Esophagus muscularis mucosa (tissue), 4 donors: ENCODE measurements at regions of chr14 and their contacts with region 1.

Region 1: DNA sequence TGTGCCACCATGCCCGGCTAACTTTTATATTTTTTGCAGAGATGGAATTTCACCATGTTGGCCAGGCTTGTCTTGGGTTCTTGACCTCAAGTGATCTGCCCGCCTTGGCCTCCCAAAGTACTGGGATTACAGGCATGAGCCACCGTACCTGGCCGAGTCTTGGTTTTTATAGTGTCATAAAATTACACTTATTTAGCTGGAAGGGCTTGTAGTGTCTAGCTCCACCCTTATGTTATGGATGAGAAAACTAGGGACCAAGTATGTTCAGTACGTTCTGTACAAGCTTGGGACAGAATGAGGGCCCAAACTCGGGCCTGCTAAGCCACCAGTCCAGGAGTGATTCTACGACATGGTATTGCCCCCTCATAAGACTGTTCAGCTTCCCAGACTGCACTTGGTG is 35.1 kb downstream of the SYNE2 start:
- DNase-seq: no peak
- H3K4me3 ChIP-seq: no peak overlapping the region
- H3K27ac ChIP-seq: no peak overlapping the region
- H3K4me1 ChIP-seq: peaks cover 28 to 30% (median 29%) of the 10 kb centered on the region in 4 donors
- H3K27me3 ChIP-seq: no peaks in the 10 kb centered on the region
- CTCF ChIP-seq: no peak
- EP300 ChIP-seq: no peak
- POLR2A ChIP-seq: no peak

Region 2: DNA sequence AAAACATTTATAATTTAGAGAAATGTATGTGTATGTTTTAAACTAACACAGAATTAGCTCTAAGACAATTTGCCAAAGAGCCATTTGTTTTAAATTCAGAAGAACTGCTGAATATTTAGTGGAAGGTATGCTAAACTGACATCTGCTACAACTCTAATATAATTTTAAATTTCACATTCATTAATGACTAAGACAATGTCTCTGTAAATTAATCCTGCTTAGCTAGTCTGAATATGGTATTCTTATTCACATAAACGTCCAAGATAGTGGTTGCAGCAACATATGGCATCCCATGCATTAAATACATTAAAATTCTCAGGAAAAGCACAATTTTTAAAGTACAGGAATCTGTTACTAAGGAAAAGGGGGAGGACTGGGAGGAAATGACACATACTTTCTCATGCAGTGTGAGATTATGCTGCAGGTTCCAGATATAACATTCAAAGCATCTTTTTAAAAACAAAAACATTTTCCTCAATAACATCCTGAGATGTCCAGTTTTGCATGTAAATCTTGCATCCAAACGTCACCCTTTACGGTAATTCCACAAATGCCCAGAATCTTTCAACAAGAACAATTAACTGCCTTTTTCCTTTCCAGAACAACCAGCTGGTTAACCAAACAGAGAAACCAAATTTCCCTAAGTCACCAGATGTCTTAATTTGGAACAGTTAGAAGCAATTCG is 273.1 kb before region 1 on chr14:
- intact Hi-C with region 1: no loop called
- DNase-seq: no peak
- H3K4me3 ChIP-seq: no peak overlapping the region
- H3K27ac ChIP-seq: no peak overlapping the region
- H3K4me1 ChIP-seq: peaks cover 0 to 8% (median 3%) of the 10 kb centered on the region in 4 donors
- H3K27me3 ChIP-seq: no peaks in the 10 kb centered on the region
- CTCF ChIP-seq: no peak
- EP300 ChIP-seq: no peak
- POLR2A ChIP-seq: no peak

Region 3: DNA sequence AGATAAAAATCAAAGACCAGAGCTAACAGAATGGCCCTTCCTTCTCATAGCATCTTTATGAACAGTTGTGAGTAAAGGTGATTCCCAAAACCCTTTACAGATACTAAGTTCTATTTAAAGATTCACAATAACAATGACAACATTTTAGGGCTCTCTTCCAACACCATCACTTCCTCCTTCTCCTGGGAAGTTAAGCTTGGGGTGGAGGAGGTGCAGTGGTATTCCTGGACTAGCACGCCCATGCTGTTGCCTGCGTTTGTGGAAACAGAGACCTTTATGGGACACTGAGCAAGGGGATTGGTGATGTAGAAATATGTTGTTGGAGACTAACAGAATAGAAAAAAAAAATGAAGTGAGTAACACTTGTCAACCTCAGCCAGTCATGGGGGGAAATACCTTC is 12.6 kb before region 1 on chr14:
- intact Hi-C with region 1: loop called (anchors 2 kb)
- DNase-seq: no peak
- H3K4me3 ChIP-seq: no peak overlapping the region
- H3K27ac ChIP-seq: peak overlapping the region; percentile 28 to 62 (median 51)
- H3K4me1 ChIP-seq: peaks cover 41 to 53% (median 49%) of the 10 kb centered on the region in 4 donors
- H3K27me3 ChIP-seq: no peaks in the 10 kb centered on the region
- CTCF ChIP-seq: no peak
- EP300 ChIP-seq: no peak
- POLR2A ChIP-seq: no peak

Region 4: DNA sequence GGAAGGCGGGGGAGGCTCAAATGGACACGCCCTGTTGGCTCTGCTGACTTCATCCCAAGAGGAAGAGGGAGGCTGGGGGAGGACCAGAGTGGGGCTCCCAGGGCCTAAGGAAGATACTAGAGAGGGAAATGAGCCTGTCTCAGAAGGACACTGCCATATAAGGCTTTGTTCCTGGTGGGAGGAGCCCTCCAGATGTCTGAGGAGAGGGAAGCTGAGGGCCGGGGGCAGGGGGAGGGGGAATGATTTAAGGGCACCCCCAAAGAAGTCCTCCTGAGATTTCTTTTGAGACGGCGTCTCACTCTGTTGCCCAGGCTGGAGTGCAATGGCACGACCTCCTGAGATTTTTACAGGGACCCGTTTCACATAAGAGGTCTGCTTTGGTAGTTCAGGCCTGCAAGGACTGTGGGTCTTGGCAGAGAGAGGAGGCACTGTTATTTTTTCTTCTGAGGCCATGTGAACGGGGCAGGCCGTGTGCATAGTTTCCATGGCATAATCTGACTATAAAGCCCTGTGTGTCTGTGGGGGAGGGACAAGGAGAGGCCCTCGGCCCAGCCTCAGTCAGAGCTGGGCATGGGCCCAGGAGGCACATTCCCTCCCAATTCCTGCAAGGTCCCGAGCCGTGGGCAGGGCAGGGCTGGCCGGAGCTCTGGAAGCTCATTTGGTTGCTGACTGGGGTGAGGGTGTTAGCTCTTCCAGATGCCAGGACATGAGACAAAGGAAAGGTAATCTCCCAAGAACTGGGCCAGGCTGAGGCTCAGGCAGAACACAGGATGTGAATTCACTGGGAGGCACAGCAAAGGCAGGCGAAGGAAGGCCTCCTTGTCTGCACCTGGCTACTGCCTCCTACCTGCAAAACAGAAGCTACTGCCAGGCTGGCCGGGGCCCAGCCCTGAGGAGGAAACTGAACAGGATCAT is 794.2 kb after region 1 on chr14:
- intact Hi-C with region 1: no loop called
- DNase-seq: no peak
- H3K4me3 ChIP-seq: peak overlapping the region in 1 of 4 donors; percentile 1
- H3K27ac ChIP-seq: peak overlapping the region; percentile 82 to 87 (median 84)
- H3K4me1 ChIP-seq: peaks cover 30 to 48% (median 43%) of the 10 kb centered on the region in 4 donors
- H3K27me3 ChIP-seq: no peaks in the 10 kb centered on the region
- CTCF ChIP-seq: no peak
- EP300 ChIP-seq: no peak
- POLR2A ChIP-seq: no peak